Sciatic nerve (tissue), 2 donors: ENCODE measurements at regions of chrX and their contacts with region 1.

Region 1: GRCh38 chrX:111822191-111822590 is 53.8 kb upstream of the TRPC5OS start:
- DNase-seq: no peak
- ATAC-seq: no peak

Region 2: GRCh38 chrX:111847491-111848133 is 25.4 kb after region 1 on chrX:
- intact Hi-C with region 1: loop called (anchors 1 kb)
- DNase-seq: no peak
- ATAC-seq: no peak